ENCODE measurements at regions of chr12 and their contacts with region 1.

Region 1: DNA sequence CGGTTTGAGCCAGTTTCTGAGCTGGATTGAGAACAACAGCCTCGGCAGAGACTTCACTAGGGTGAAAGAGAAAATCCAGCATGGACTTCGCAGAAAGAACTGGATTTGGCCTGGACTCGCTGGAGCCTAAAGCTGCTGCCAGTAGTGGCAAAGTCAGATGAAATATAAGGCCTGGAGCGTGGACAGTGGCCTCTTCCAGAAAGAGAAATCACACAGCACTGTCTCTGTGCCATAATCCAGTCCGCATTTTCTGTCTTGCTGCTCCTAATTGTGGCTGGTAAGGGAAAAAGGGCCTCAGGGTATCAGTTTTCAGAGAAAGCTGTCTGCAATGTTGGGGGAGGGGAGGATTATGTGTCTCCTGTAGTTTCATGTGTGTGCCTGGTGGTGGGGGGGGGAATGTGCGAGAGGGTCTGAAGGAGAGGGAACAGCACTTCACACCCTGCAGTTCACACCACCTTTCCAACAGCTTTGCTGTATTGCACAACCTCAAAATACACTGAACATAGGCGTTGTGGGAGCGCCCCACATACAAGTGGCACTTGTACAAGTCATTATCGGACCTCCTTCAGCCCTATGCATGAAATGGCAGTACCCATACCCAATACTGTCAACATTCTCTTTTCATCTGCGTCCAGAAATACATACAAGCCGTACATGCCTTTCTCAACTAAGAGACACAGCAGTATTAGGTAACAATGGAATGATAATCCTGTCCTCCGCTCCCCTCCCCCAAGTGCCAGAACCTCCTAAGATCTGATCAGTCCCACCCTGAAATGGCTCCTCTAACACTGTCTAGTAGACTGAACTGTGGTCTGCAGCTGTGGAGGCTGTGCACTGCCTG is 107.5 kb upstream of the ATF7IP start:
- DNase-seq: peak in 7 of 10 donors; percentile 74 to 97 (median 88)

Region 2: DNA sequence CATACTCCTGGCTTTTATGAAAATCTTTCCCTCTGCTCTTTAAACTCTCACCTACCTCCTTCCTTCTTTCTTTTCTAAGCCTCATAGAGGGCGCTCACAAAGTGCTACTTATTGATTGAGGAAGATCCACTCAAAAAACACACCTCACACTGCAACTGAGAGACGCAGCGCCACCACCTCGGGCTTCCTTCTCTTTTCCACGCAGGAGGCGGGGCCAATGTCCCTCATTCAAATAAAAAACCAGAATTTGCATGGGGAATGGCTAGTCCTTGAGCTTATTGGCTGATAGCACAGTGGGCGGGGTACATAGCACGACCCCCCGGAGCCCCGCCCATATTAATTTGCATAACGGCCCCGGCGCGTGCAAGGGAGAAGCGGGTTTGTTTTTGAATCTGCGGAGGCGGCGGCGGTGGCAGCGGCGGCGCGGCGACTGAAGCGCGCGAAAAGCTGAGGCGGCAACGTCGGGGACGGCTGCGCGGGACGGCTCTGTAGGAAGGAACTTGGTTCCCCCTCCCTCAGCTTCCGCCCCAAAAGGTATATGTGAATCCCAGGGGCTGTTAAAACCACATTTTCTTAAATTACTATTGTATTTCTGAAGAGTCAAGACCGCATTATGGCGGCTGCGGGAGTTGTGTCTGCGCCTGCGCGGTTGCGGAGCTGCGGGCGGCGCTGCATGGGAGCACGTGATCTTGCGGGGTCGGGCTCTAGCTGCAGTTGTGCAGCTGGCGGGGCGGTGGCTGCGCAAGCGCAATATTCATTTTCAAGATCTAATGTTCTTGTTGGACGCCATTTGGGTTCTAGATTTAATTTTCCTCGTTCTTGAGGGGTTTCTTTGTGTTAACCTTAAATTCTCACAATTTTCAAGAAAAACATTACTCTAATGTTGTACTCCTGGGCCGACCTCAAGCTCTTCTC is 107.6 kb after region 1 on chr12 and contains the start of gene ATF7IP:
- intact Hi-C with region 1: loop called (anchors 1 kb)
- DNase-seq: peak; percentile 83 to 98 (median 91)

Region 3: GRCh38 chr12:14417715-14418114 is 159.8 kb after region 1 on chr12:
- intact Hi-C with region 1: loop called (anchors 2 kb)
- DNase-seq: peak; percentile 49 to 95 (median 70)

Region 4: GRCh38 chr12:14540801-14541462 is 283.0 kb after region 1 on chr12:
- intact Hi-C with region 1: no loop called
- DNase-seq: no peak

Region 5: DNA sequence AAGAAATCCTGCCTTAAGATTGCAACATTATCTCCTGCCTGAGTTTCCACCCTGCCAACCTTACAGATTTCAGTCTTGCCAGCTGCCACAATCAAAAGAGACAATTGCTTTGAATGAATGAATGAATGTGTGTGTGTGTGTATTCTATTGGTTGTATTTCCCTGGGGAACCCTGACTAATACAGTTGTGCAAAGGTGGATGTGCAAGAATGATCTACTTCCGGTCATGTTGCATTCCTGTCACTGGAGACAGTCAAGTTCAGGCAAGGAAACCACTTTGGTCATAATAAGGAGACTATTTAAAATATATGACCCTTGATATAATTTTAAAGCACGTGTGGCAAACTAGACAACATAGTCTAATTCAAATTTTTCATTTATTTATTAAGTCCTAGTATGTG is 950.2 kb after region 1 on chr12:
- intact Hi-C with region 1: no loop called
- DNase-seq: no peak

Measured in posterior cingulate gyrus (tissue), 11 donors.